GM12878 (cell line): ENCODE measurements at regions of chr12 and their contacts with region 1.

Region 1: DNA sequence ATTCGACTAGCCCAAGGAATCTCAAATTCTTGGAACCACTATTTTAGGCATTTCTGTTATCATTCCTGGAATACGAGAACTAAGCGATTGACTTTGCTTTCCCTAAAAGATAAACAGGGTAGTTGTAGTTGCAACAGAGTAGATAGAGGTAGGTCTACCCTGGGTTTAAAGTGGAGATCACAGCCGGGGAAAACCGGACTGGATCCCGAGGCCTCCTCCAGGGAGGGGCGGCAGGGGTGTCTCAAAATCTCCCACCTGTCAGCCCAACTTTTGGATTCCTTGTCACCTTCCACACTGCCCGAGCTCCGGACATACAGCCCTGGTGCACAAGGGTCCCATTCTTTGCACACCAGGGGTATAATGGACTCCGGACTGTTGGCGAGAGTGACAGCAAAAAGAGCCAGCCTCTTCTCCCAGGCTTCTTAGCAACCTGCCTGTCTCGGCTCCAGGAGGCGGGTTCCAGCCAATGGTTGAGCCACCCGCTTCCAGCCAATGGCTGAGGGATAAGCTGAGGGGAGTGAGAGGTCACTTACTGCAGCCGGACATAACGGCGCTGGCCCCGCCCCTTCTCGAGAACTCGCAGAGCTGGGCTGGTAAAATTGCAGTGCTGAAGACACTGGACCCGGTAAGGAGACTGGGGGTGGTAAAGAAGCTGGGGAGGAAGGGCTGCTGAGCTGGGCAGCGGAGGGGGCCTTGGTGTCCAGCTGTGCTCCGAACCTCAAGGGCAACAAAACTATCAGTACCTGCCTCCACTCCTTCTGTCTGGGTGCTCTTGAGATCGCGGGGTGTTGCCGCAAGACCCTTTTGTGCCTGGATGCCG is at the start of gene SUOX:
- DNase-seq: peak; percentile 83
- ATAC-seq: peak; percentile 100
- H3K4me3 ChIP-seq: peak within 1 kb of the TSS; percentile 74
- H3K27ac ChIP-seq: peak within 1 kb of the TSS; percentile 33; the same call in 1 of the 2 replicates
- H3K4me1 ChIP-seq: peaks cover 3% of the 10 kb centered on the region; the same call in 1 of the 2 replicates
- H3K27me3 ChIP-seq: no peaks in the 10 kb centered on the region
- CTCF ChIP-seq: no peak
- EP300 ChIP-seq: no peak
- POLR2A ChIP-seq: peak; percentile 72
- RAD21 ChIP-seq: no peak
- polyA plus RNA-seq, gene SUOX: 5.1 to 5.2 TPM

Region 2: GRCh38 chr12:55982319-55982936 is 14.5 kb before region 1 on chr12:
- CTCF ChIA-PET with region 1: interaction called, 45 read pairs
- POLR2A ChIA-PET with region 1: interaction called, 15 read pairs
- RAD21 ChIA-PET with region 1: interaction called, 22 read pairs
- SMC1A ChIA-PET with region 1: interaction called, 24 read pairs
- in situ Hi-C with region 1: no loop called
- intact Hi-C with region 1: no loop called
- DNase-seq: peak; percentile 60
- ATAC-seq: peak; percentile 96
- H3K4me3 ChIP-seq: 0 out of 2 replicates have a peak overlapping the region, but pooled peaks have one; percentile 12
- H3K27ac ChIP-seq: peak overlapping the region; percentile 38
- H3K4me1 ChIP-seq: peaks cover 16% of the 10 kb centered on the region
- H3K27me3 ChIP-seq: no peaks in the 10 kb centered on the region
- CTCF ChIP-seq: no peak
- EP300 ChIP-seq: no peak
- POLR2A ChIP-seq: no peak
- RAD21 ChIP-seq: no peak

Region 3: GRCh38 chr12:56007564-56008559 is 10.9 kb after region 1 on chr12:
- CTCF ChIA-PET with region 1: interaction called, 28 read pairs
- POLR2A ChIA-PET with region 1: interaction called, 15 read pairs
- RAD21 ChIA-PET with region 1: interaction called, 25 read pairs
- SMC1A ChIA-PET with region 1: interaction called, 6 read pairs
- in situ Hi-C with region 1: no loop called
- intact Hi-C with region 1: no loop called
- DNase-seq: no peak
- ATAC-seq: peak; percentile 92
- H3K4me3 ChIP-seq: peak overlapping the region; percentile 79
- H3K27ac ChIP-seq: peak overlapping the region; percentile 24; the same call in 1 of the 2 replicates
- H3K4me1 ChIP-seq: no peaks in the 10 kb centered on the region
- H3K27me3 ChIP-seq: no peaks in the 10 kb centered on the region
- CTCF ChIP-seq: no peak
- EP300 ChIP-seq: no peak
- POLR2A ChIP-seq: no peak
- RAD21 ChIP-seq: no peak

Region 4: DNA sequence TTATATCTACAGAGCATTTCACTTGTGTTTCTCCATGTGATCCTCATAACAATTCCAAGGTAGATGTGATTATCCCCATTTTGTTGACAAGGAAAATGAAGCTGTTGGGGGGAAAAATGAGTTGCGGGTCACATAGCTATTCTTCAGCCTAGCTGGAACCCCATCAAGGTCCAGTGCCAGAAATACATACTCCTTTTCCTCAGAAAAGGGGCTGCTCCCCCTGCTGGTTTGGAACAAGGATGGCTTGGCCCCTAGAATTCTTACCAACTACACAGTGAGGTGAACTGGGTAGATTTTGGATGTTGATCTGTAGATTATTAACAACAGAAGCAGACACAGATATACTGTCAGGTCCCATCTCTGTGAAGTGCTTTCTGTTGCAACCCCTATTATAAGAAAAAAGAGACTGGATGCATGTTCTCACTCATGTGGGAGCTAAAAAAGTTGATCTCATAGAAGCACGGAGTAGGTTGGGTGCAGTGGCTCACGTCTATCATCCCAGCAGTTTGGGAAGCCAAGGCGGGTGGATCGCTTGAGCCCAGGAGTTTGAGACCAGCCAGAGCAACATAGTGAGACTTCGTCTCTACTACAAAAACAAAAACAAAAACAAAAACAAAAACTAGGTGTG is 32.9 kb after region 1 on chr12:
- CTCF ChIA-PET with region 1: interaction called, 107 read pairs
- POLR2A ChIA-PET with region 1: interaction called, 8 read pairs
- RAD21 ChIA-PET with region 1: interaction called, 44 read pairs
- SMC1A ChIA-PET with region 1: interaction called, 15 read pairs
- in situ Hi-C with region 1: no loop called
- intact Hi-C with region 1: loop called (anchors 1 kb)
- DNase-seq: no peak
- ATAC-seq: peak; percentile 94
- H3K4me3 ChIP-seq: no peak overlapping the region
- H3K27ac ChIP-seq: no peak overlapping the region
- H3K4me1 ChIP-seq: no peaks in the 10 kb centered on the region
- H3K27me3 ChIP-seq: no peaks in the 10 kb centered on the region
- CTCF ChIP-seq: peak; percentile 69 to 72 (median 71)
- EP300 ChIP-seq: no peak
- POLR2A ChIP-seq: no peak
- RAD21 ChIP-seq: peak; percentile 64